ENCODE measurements at regions of chr3 and their contacts with region 1.

Region 1: GRCh38 chr3:98013411-98014267 is 21.5 kb downstream of the GABRR3 start:
- DNase-seq: peak; percentile 46
- H3K4me3 ChIP-seq: no peak overlapping the region
- H3K27ac ChIP-seq: no peak overlapping the region
- H3K4me1 ChIP-seq: peaks cover 6% of the 10 kb centered on the region
- H3K27me3 ChIP-seq: no peaks in the 10 kb centered on the region
- CTCF ChIP-seq: peak in 1 of 2 donors; percentile 19

Region 2: GRCh38 chr3:97940034-97940433 is 73.6 kb before region 1 on chr3:
- CTCF ChIA-PET with region 1: no interaction called
- dilution Hi-C with region 1: loop called (anchors 5 kb)
- in situ Hi-C with region 1: no loop called
- intact Hi-C with region 1: no loop called
- DNase-seq: no peak
- H3K4me3 ChIP-seq: no peak overlapping the region
- H3K27ac ChIP-seq: no peak overlapping the region
- H3K4me1 ChIP-seq: no peaks in the 10 kb centered on the region
- H3K27me3 ChIP-seq: no peaks in the 10 kb centered on the region
- CTCF ChIP-seq: no peak

Region 3: DNA sequence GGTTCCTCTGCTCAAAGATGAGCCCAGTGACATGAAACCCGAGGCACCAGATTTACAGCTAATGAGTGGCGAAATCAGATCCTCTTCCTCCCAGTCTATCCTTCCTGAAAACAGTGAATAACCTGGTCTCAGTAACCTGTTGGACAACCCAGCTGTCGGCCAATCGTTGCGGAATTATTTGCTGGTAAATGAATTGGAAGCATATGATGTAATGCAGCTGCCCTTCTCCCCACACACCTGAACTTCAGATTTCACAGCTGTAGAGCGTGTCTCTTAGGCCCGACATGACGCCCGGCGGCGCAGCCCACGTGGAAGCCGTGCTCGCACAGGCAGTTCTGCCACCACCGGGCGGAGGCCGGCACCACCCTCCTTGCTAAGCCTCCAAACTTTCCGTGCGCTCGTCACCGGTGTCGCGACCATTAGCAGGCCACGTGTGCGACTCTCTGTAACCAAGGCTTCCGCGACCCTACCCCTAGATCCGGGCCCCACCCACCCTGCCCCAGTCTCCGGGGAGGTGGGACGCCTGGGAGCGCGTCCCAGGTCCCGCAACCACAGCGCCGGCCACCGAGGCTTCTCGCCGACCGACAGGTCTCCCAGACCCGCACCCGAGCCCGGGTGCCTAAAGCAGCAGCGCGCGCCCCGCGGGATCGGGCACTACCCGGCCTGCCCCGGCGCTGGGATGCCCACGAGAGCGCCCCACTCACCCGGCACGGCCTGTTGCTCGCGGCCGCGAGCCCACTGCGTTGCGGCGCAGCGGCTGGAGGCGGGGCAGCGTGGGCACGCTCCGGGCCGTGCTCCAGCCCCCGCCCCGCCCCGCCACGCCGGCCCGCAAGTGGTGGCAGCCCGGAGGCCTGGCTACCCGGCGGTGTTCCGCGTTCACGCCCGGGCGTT is 41.7 kb before region 1 on chr3 and contains the start of gene RIOX2:
- CTCF ChIA-PET with region 1: no interaction called
- dilution Hi-C with region 1: no loop called
- in situ Hi-C with region 1: no loop called
- intact Hi-C with region 1: loop called (anchors 5 kb)
- DNase-seq: peak; percentile 74
- H3K4me3 ChIP-seq: peak within 1 kb of the TSS; percentile 51 to 71 (median 67)
- H3K27ac ChIP-seq: peak within 1 kb of the TSS; percentile 46
- H3K4me1 ChIP-seq: peaks cover 10% of the 10 kb centered on the region
- H3K27me3 ChIP-seq: no peaks in the 10 kb centered on the region
- CTCF ChIP-seq: no peak
- total RNA-seq, gene RIOX2: 33.3 to 42.4 TPM

Region 4: GRCh38 chr3:98343647-98344507 is 330.2 kb after region 1 on chr3:
- CTCF ChIA-PET with region 1: no interaction called
- dilution Hi-C with region 1: no loop called
- in situ Hi-C with region 1: no loop called
- intact Hi-C with region 1: no loop called
- DNase-seq: peak; percentile 55
- H3K4me3 ChIP-seq: no peak overlapping the region
- H3K27ac ChIP-seq: no peak overlapping the region
- H3K4me1 ChIP-seq: peaks cover 3% of the 10 kb centered on the region
- H3K27me3 ChIP-seq: peaks cover 4% of the 10 kb centered on the region
- CTCF ChIP-seq: peak; percentile 80 to 81